Right ventricle myocardium superior (tissue), 1 donor: ENCODE measurements at regions of chr12 and their contacts with region 1.

Region 1: GRCh38 chr12:38316391-38317129 is at the start of gene ALG10B:
- DNase-seq: peak; percentile 93
- ATAC-seq: peak; percentile 100
- total RNA-seq, gene ALG10B: 4.2 TPM

Region 2: DNA sequence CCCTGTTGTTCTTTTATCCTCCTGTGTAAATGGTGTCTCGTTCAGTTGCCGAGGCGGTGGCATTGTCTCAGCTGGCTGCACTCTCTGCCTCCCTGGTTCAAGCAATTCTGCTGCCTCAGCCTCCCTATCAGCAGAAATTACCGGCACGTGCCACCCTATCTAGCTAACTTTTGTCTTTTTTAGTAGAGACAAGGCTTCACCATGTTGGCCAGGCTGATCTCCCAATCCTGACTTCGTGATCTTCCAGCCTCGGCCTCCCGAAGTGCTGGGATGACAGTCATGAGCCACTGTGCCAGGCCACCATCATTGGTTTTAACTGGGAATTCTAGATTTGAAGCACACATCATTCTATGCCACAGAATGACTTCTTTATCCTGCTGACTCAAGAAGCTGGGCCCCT is 175.3 kb before region 1 on chr12:
- intact Hi-C with region 1: loop called (anchors 2 kb)
- DNase-seq: no peak
- ATAC-seq: no peak